ENCODE measurements at regions of chr16 and their contacts with region 1.

Region 1: DNA sequence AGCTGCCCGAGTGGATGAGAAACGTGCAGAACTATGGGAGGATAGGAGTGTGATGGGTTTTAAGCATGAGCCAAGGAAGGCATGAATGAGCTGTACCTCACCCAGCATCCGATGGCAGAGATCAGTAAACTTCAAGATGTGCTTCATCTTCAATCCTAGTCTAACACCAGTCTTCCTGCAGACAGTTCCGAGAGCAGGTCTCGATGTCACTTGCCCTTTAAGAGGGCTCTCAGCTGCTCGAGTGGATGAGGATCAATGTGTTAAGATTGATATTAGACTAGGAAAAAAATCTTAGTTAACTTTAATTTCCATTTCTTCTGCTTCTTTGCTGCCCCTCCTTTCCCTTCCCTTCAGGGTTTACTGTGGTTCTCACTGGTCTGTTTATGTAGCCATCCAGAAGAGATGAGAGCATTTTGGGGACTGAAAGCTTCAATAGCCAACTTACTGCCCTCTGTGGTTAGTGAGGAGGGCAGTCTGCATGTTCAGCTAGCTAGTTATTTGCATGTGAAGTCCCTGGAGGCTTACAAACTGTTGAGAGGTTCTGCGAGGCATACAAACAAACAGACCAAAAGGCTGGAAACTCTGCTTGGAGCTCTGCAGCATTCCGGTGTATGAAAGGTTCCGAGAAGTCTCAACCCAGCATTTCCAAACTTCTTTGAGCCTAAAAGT is 15.3 kb downstream of the KLHL36 start:
- DNase-seq: no peak
- ATAC-seq: no peak
- H3K4me3 ChIP-seq: no peak overlapping the region
- H3K4me3 Mint-ChIP-seq: no peak overlapping the region
- H3K27ac ChIP-seq: no peak overlapping the region
- H3K27ac Mint-ChIP-seq: no peak overlapping the region
- H3K4me1 ChIP-seq: peaks cover 0 to 10% of the 10 kb centered on the region in 2 experiments
- H3K4me1 Mint-ChIP-seq: peaks cover 13 to 32% (median 20%) of the 10 kb centered on the region in 3 donors
- H3K27me3 ChIP-seq: no peaks in the 10 kb centered on the region
- H3K27me3 Mint-ChIP-seq: no peaks in the 10 kb centered on the region

Region 2: DNA sequence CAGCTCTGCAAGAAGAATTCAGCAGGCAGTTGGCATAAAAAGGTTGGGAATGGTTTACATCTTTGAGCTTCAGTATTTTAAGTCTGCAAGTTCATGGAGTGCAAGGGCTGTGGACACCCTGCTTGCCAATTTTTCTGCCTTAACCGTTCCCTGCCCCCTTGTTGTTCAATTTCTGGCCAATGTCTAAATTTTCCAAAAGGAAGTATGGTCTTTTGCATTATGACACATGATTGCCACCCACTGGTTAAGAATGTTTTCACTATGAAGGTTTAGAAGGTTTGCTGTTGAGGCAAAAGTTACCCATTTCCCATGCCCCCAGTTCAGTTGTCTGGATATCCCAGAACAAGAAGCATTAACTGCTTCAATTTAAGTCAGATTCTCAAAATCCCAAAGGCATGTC is 1594.9 kb before region 1 on chr16:
- CTCF ChIA-PET with region 1: no interaction called
- POLR2A ChIA-PET with region 1: no interaction called
- DNase-seq: no peak
- ATAC-seq: no peak
- H3K4me3 ChIP-seq: no peak overlapping the region
- H3K4me3 Mint-ChIP-seq: no peak overlapping the region
- H3K27ac ChIP-seq: no peak overlapping the region
- H3K27ac Mint-ChIP-seq: no peak overlapping the region
- H3K4me1 ChIP-seq: no peaks in the 10 kb centered on the region
- H3K4me1 Mint-ChIP-seq: no peaks in the 10 kb centered on the region
- H3K27me3 ChIP-seq: no peaks in the 10 kb centered on the region
- H3K27me3 Mint-ChIP-seq: no peaks in the 10 kb centered on the region

Region 3: DNA sequence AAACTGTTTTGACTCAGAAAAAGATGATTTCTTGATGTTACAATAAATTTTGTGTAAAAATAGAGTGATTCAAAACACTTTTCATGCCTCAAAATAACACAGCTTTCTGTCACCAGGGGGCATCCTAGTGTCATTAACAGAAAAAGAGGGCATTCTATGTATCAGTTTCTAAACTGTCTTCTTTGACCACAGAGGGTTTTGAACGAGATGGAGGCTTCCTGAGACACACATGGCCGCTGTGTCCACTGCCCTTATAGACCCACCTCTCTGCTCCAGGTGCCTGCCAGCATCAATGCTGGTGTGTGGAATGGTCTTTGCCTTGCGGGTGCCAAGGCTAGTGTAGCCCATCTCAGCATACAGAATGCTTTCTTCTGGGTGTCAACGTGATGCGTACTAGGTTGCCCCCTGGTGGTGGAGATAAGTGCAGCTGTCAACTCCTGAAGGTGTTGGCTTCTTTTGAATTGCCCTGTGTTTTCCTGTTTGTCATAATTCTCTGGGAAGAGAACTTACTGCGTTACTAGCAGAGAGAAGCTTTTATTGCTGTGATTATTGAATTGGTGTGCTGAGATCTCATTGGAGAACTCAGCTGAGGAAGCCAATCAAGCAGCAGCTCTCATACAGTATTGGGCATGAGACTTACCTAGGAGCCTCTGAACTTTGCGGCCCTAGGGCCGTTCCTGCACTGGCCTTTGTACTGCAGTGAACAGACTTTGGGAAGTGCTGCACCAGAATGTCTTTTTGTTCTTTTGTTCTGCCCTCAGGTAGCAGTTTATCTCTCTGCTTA is 74.9 kb after region 1 on chr16:
- CTCF ChIA-PET with region 1: interaction called in 1 of 2 experiments, 10 read pairs
- POLR2A ChIA-PET with region 1: no interaction called
- DNase-seq: peak; percentile 41 to 90 (median 67)
- ATAC-seq: peak; percentile 70 to 78 (median 72)
- H3K4me3 ChIP-seq: no peak overlapping the region
- H3K4me3 Mint-ChIP-seq: peak overlapping the region in 1 of 3 donors; percentile 18
- H3K27ac ChIP-seq: no peak overlapping the region
- H3K27ac Mint-ChIP-seq: peak overlapping the region in 1 of 2 donors; percentile 69
- H3K4me1 ChIP-seq: peaks cover 6 to 31% of the 10 kb centered on the region in 2 experiments
- H3K4me1 Mint-ChIP-seq: peaks cover 43 to 57% (median 52%) of the 10 kb centered on the region in 3 donors
- H3K27me3 ChIP-seq: no peaks in the 10 kb centered on the region
- H3K27me3 Mint-ChIP-seq: no peaks in the 10 kb centered on the region